Tibial artery (tissue), 4 donors: ENCODE measurements at regions of chr17 and their contacts with region 1.

Region 1: GRCh38 chr17:42517516-42517915 is 18.5 kb upstream of the NAGLU start:
- DNase-seq: peak; percentile 91 to 97
- H3K4me3 ChIP-seq: no peak overlapping the region
- H3K27ac ChIP-seq: peak overlapping the region; percentile 92
- H3K4me1 ChIP-seq: peaks cover 11 to 90% (median 77%) of the 10 kb centered on the region in 4 donors
- H3K27me3 ChIP-seq: no peaks in the 10 kb centered on the region
- CTCF ChIP-seq: peak; percentile 92 to 95

Region 2: GRCh38 chr17:42322382-42323267 is 194.9 kb before region 1 on chr17:
- intact Hi-C with region 1: loop called (anchors 5 kb)
- DNase-seq: peak; percentile 94 to 97
- H3K4me3 ChIP-seq: no peak overlapping the region
- H3K27ac ChIP-seq: peak overlapping the region; percentile 35 to 58
- H3K4me1 ChIP-seq: peaks cover 0 to 38% (median 11%) of the 10 kb centered on the region in 4 donors
- H3K27me3 ChIP-seq: no peaks in the 10 kb centered on the region
- CTCF ChIP-seq: peak; percentile 97 to 100

Region 3: DNA sequence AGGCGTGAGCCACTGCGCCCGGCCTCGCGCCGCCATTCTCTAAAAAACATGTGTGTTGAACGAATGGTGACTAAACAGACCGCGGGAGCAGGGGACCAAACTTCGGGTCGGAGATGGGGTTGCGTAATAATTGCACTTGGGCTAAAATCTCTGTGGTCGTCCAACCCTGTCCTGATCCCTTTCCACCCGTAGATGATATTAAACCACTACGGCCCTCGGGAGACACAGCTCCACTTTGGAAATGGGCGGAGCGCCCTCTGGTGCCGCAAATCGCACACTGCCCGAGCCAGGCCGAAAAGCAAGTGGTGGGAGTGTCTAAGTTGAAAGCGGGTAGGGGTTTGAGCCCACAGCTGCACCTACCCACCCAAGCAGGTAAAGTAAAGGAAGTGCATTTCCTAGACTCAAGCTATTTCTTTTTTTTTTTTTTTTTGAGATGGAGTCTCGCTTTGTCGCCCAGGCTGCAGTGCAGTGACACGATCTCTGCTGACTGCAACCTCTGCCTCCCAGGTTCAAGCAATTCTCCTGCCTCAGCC is 111.5 kb before region 1 on chr17:
- intact Hi-C with region 1: loop called (anchors 5 kb)
- DNase-seq: peak; percentile 89 to 91
- H3K4me3 ChIP-seq: no peak overlapping the region
- H3K27ac ChIP-seq: peak overlapping the region; percentile 98 to 100
- H3K4me1 ChIP-seq: peaks cover 12 to 93% (median 76%) of the 10 kb centered on the region in 4 donors
- H3K27me3 ChIP-seq: no peaks in the 10 kb centered on the region
- CTCF ChIP-seq: peak; percentile 82 to 90

Region 4: GRCh38 chr17:42422958-42423712 is 94.4 kb before region 1 on chr17 and contains the start of gene CAVIN1:
- intact Hi-C with region 1: loop called (anchors 5 kb)
- DNase-seq: peak; percentile 99 to 100
- H3K4me3 ChIP-seq: peak within 1 kb of the TSS; percentile 86 to 99
- H3K27ac ChIP-seq: peak within 1 kb of the TSS; percentile 98 to 100
- H3K4me1 ChIP-seq: peaks cover 0 to 55% (median 36%) of the 10 kb centered on the region in 4 donors
- H3K27me3 ChIP-seq: no peaks in the 10 kb centered on the region
- CTCF ChIP-seq: peak in 1 of 2 experiments; percentile 5

Region 5: DNA sequence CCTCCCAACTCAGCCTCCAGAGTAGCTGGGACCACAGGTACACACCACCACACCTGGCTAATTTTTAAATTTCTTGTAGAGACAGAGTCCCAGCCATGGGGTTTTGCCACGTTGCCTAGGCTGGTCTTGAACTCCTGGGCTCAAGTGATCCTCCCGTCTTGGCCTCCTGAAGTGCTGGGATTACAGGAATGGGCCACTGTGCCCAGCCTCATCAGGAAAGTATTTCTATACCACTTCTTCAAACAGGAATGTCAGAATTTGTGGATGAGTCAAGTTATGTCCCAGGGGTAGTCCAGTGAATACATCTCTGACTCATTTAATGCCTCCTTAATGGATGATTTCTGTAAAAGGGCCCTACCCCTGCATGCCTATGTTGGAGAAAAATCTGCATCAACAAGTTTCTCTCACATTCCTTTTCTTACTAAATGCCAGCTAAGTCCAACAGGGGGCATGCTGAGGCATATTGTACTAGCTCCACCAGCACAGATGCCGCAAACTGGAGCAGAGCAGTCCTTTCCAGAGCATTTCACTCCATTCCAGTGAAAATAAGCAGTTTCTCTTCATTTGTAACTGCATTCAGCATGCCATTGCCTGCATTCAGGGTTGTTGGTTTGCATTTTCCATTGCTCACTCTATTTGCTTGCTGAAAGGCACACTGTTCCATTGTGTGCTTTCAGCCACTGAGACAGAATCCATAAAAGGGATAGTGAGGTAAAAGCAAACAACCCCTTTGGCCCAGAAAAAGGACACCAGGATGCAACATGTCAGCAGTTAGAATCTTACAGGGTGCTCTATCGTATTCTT is 89.2 kb before region 1 on chr17:
- intact Hi-C with region 1: loop called (anchors 5 kb)
- DNase-seq: peak in 1 of 2 donors; percentile 76
- H3K4me3 ChIP-seq: no peak overlapping the region
- H3K27ac ChIP-seq: peak overlapping the region; percentile 45 to 62
- H3K4me1 ChIP-seq: peaks cover 0 to 35% (median 15%) of the 10 kb centered on the region in 4 donors
- H3K27me3 ChIP-seq: no peaks in the 10 kb centered on the region
- CTCF ChIP-seq: peak; percentile 71 to 82

Region 6: DNA sequence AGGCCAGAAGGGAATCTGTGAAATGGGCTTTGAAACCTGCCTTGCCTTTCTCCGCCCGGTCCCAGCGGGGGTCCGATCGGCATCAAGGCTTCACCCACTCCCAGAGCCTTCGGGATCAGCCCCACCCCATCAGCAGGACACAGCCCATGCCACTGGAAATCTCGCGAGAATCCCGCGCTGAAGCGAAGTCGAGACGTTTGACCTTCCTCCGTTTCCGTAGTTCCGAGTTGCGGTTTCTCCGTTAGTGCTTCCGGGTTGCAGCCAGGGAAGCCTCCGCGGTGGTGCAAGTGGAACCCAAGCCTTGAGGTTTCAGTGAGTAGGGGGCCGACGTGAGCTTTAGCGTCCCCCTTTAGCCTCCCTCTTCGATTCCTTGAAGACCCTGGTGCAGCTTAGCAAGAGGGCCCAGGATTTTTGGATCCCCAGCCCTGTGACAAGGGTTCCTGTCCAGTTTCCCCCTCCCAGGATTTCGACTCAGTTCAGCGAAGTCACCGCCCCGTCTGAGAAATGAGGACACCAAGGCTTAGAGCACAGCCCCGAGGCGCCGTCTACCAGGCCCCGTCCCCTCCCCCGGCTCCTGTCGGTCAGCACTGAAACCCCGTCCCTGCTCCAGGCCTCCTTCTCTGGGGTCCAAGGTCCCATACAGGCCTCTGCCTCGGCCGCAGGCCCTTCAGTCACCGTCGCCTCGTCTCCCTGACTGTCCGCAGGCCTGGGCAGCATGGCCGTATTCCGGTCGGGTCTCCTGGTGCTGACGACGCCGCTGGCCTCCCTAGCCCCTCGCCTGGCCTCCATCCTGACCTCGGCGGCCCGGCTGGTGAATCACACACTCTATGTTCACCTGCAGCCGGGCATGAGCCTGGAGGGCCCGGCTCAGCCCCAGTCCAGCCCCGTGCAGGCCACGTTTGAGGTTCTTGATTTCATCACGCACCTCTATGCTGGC is 44.7 kb after region 1 on chr17 and contains the start of gene COASY:
- intact Hi-C with region 1: no loop called
- DNase-seq: peak; percentile 95 to 98
- H3K4me3 ChIP-seq: peak within 1 kb of the TSS; percentile 69 to 90
- H3K27ac ChIP-seq: peak within 1 kb of the TSS; percentile 83 to 87
- H3K4me1 ChIP-seq: peaks cover 4 to 53% (median 43%) of the 10 kb centered on the region in 4 donors
- H3K27me3 ChIP-seq: no peaks in the 10 kb centered on the region
- CTCF ChIP-seq: no peak

Region 7: GRCh38 chr17:42629411-42630009 is 112.0 kb after region 1 on chr17:
- intact Hi-C with region 1: no loop called
- DNase-seq: no peak
- H3K4me3 ChIP-seq: no peak overlapping the region
- H3K27ac ChIP-seq: no peak overlapping the region
- H3K4me1 ChIP-seq: no peaks in the 10 kb centered on the region
- H3K27me3 ChIP-seq: no peaks in the 10 kb centered on the region
- CTCF ChIP-seq: no peak